Endothelial cell of umbilical vein (primary cell): ENCODE measurements at regions of chr10 and their contacts with region 1.

Region 1: GRCh38 chr10:32445740-32446535 is at the start of gene CCDC7:
- DNase-seq: peak; percentile 93
- H3K4me3 ChIP-seq: peak within 1 kb of the TSS; percentile 47 to 91 (median 82)
- H3K27ac ChIP-seq: peak within 1 kb of the TSS; percentile 100
- H3K4me1 ChIP-seq: peaks cover 8% of the 10 kb centered on the region
- H3K27me3 ChIP-seq: peaks cover 2 to 16% of the 10 kb centered on the region in 2 experiments
- CTCF ChIP-seq: peak; percentile 53 to 63
- POLR2A ChIP-seq: peak; percentile 93
- total RNA-seq, gene CCDC7: 6.6 and 8.2 TPM in 2 replicates

Region 2: DNA sequence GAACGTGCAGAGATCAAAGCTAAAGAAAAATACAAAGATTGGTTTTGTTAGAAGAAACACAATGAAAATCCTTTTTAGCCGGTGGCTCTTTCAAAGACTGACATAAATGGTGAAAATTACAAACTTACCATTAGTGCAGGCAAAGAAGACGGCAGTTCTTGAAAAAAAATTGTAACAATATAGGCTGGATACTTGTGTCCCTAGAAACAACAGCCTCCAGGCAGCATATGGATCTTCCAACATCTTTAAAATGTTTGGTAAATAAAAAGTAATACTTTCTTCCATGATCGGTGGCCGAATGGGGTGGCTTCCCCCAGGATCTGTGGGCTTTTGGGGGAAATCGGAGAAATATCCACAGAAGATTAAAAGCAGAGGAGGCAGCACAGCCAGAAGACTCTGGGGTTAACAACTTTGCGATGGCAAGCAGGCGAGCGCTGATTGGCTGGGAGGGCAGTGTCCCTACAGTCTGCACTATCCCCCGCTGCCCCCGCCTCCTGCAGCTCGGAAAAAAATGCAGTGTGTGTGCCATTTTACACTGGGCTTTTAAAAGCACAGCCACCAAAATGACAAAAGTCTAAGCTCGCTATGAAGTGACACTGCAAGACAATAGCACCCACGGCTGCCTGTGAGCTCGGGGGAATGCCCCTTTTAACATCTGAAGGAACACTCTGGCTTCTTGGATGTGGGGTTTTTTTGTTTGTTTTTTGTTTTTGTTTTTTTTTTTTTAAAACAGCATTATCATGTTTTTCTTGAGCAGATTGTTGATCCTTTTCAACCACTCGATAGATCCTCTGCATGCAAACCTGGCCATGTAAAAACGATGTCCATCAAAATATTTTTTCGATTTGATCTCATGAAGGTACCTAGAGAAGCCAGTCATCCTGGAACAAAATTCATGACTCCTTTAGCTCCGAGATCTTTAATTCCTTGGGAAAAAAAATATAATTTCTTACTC is 67.3 kb before region 1 on chr10:
- CTCF ChIA-PET with region 1: interaction called, 4 read pairs
- POLR2A ChIA-PET with region 1: no interaction called
- dilution Hi-C with region 1: no loop called
- intact Hi-C with region 1: loop called (anchors 1 kb)
- DNase-seq: peak; percentile 89
- H3K4me3 ChIP-seq: peak overlapping the region; percentile 87 to 99 (median 93)
- H3K27ac ChIP-seq: peak overlapping the region; percentile 85
- H3K4me1 ChIP-seq: peaks cover 13% of the 10 kb centered on the region
- H3K27me3 ChIP-seq: no peaks in the 10 kb centered on the region
- CTCF ChIP-seq: no peak
- POLR2A ChIP-seq: peak; percentile 60

Region 3: DNA sequence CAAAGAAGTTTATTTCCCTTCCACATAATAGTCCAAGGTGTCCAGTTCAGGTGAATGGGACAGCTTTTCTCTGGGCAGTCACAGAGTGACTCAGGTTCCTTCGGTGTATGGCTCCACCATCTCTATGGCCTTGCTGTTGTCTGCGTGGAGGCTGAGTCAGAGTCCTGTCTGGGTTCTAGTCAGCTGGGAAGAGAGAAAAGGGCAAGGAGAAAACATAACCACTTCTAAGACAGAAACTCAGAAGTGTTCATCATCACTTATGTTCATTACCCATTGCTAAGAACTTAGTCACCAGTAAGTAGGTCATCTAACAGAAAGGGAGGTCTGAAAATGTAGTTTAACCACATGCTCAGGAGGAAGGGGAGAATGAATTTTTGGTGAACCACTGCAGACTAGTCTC is 32.4 kb before region 1 on chr10:
- CTCF ChIA-PET with region 1: no interaction called
- POLR2A ChIA-PET with region 1: no interaction called
- dilution Hi-C with region 1: no loop called
- intact Hi-C with region 1: loop called (anchors 1 kb)
- DNase-seq: peak; percentile 49
- H3K4me3 ChIP-seq: no peak overlapping the region
- H3K27ac ChIP-seq: peak overlapping the region; percentile 24
- H3K4me1 ChIP-seq: peaks cover 24% of the 10 kb centered on the region
- H3K27me3 ChIP-seq: peaks cover 0 to 2% of the 10 kb centered on the region in 2 experiments
- CTCF ChIP-seq: no peak
- POLR2A ChIP-seq: no peak